GM10248 (cell line): ENCODE measurements at regions of chr7 and their contacts with region 1.

Region 1: GRCh38 chr7:73708961-73709534 is 10.4 kb downstream of the STX1A start:
- DNase-seq: no peak
- CTCF ChIP-seq: no peak

Region 2: GRCh38 chr7:73578342-73579127 is 130.5 kb before region 1 on chr7 and contains the start of gene TBL2:
- CTCF ChIA-PET with region 1: no interaction called
- POLR2A ChIA-PET with region 1: no interaction called
- DNase-seq: peak; percentile 99
- CTCF ChIP-seq: peak; percentile 20

Region 3: GRCh38 chr7:73738612-73739374 is 29.7 kb after region 1 on chr7 and contains the start of gene ABHD11:
- CTCF ChIA-PET with region 1: interaction called, 13 read pairs
- POLR2A ChIA-PET with region 1: interaction called, 3 read pairs
- DNase-seq: peak; percentile 100
- CTCF ChIP-seq: no peak